AG04449 (cell line): ENCODE measurements at regions of chr12 and their contacts with region 1.

Region 1: DNA sequence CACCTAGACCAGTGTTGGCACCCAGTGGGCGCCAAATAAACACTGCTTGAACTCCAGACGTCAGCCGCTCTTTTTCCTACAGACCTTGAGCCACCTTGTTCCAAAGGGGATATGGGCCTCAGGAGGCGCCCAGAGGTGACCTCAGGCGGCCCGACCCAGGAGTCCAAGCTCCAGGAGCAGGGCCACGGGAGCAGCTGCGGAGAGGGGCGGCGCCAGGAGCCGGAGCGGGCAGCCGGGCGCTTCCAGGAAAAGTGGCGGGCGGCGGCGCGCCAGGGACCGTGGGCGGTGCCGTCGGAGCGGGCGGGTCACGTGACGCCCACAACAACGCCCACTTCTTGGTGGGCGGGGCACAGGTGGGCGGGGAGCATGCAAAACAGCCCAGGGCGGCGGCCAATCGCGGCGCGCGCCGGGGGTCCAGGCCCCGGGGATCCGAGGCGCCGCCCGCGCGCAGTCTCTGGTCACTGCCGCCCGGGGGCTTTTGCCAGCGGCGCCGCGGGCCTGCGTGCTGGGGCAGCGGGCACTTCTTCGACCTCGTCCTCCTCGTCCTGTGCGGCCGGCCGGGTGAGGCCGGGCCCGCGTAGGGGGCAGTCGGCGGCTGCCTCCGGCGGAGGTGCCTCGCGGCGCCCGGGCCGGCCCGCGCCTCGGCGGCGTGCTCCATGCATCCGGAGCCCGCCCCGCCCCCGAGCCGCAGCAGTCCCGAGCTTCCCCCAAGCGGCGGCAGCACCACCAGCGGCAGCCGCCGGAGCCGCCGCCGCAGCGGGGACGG is at the start of gene ORAI1:
- DNase-seq: peak; percentile 16
- H3K4me3 ChIP-seq: peak within 1 kb of the TSS; percentile 69
- CTCF ChIP-seq: peak; percentile 27

Region 2: GRCh38 chr12:121579981-121580868 is 46.0 kb before region 1 on chr12:
- CTCF ChIA-PET with region 1: interaction called, 54 read pairs
- POLR2A ChIA-PET with region 1: interaction called, 11 read pairs
- DNase-seq: no peak
- H3K4me3 ChIP-seq: peak overlapping the region; percentile 61
- CTCF ChIP-seq: no peak

Region 3: DNA sequence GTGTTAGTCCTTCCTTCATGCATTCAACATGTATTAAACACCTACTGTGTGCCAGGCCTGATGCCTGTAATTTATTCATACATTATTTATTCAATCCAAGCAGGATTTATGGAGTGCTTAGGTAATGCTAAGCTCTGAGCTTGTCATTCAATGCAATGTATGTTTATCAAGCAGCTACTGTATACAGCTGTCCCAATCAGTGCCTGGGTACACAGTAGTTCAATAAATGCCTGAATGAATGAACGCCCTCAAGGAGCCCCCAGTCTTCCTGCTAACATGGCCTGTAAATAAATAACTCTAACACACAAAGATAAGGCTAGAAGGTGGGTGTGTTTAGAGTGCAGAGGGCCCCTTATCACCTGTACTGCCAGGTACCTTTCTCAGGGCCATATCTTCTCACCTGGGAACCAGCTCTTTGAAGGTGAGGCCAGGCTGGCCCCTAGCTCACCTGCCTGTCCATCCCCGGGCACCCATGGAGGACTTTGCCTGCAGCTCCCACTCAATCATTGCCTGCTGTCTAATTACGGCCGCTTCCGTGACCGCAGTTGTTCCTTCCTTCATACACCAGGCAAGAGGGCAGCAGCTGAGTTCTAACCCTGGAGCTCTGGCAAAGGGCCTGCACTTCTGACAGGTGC is 25.5 kb before region 1 on chr12:
- CTCF ChIA-PET with region 1: interaction called, 21 read pairs
- POLR2A ChIA-PET with region 1: no interaction called
- DNase-seq: no peak
- H3K4me3 ChIP-seq: no peak overlapping the region
- CTCF ChIP-seq: no peak

Region 4: GRCh38 chr12:121610239-121611149 is 15.8 kb before region 1 on chr12:
- CTCF ChIA-PET with region 1: interaction called, 37 read pairs
- POLR2A ChIA-PET with region 1: no interaction called
- DNase-seq: no peak
- H3K4me3 ChIP-seq: no peak overlapping the region
- CTCF ChIP-seq: no peak

Region 5: GRCh38 chr12:121637231-121637914 is 11.1 kb after region 1 on chr12:
- CTCF ChIA-PET with region 1: interaction called, 63 read pairs
- POLR2A ChIA-PET with region 1: interaction called, 3 read pairs
- DNase-seq: no peak
- H3K4me3 ChIP-seq: no peak overlapping the region
- CTCF ChIP-seq: no peak

Region 6: GRCh38 chr12:121678716-121679580 is 52.7 kb after region 1 on chr12:
- CTCF ChIA-PET with region 1: interaction called, 23 read pairs
- POLR2A ChIA-PET with region 1: no interaction called
- DNase-seq: no peak
- H3K4me3 ChIP-seq: no peak overlapping the region
- CTCF ChIP-seq: no peak